Tibial artery (tissue), 4 donors: ENCODE measurements at regions of chr18 and their contacts with region 1.

Region 1: DNA sequence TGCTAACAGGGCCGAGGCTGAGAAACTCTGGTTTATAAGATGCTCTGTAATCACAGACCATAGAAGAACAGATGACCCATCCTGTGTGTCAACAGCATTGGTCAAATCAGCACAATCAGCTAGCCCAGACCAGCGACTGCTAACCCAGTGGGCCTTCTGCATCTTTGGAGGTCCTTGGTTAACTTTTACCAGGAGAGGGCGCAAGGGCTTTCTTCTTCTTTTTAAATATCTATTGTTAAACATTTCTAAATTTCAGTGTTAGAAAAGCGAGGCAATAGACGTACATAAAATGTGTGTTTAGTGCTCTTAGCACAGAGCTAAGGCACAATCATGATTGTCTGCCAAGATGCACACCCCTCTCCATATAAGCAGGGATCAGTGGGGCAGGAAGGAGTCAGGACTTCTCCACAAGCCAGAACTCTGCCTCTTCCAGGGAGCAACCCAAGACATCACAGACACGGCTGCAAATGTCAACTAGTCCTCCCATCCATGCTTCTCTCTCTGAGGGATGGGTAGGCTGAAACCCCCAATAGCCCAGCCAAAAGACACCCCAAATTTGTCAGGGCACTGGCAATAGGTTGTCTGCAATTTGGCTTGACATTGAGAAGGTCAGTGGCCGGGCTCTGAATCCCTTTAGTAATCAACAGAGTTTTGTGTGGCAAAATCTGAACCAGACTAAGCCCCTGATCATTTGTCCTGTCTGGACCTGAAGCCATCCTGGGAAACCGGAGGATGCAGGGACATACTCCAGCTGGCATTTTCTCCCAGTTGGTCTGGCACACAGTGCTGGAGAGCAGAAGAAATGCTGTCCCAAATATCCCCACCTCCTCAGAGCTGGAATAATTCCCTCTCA is 188.2 kb downstream of the BCL2 start:
- DNase-seq: peak in 1 of 2 donors; percentile 69
- H3K4me3 ChIP-seq: no peak overlapping the region
- H3K27ac ChIP-seq: peak overlapping the region; percentile 64 to 71
- H3K4me1 ChIP-seq: peaks cover 0 to 16% (median 7%) of the 10 kb centered on the region in 4 donors
- H3K27me3 ChIP-seq: no peaks in the 10 kb centered on the region
- CTCF ChIP-seq: peak; percentile 69 to 81

Region 2: DNA sequence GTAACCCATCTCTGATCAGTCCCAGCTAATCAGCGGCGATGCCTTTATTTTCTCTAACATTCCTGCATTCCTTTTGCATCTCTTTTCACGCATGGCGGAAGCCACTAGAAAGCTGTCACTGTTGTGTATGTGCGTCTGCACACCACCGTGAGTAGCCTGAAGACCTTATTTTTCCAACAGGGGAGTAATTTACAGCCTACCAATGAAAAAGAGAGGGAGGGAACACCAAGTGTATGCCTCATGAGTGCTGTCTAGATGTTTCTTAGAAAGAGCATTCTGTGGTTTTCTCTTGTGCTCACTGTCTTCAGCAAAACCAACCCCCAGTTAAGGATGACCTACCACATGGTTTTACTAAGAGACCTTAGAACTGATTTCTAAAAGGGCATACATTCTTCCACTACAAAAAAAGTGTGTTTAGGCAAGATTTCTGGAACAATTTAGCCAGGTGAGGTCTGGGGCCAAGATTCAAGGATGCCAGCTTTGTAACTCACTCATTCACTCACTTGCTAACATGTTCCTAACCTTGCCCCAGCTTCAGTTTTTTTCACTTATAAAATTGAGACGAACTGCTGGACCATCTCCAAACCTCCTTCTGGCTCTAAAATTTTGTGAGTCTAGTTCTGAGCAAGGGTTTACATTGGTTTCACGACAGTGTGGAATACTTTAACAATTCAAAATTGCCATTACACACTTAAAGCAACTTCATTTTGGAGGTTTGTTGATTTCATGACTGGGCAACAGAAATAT is 136.8 kb after region 1 on chr18:
- intact Hi-C with region 1: loop called (anchors 1 kb)
- DNase-seq: no peak
- H3K4me3 ChIP-seq: no peak overlapping the region
- H3K27ac ChIP-seq: peak overlapping the region in 1 of 2 donors; percentile 22
- H3K4me1 ChIP-seq: peaks cover 0 to 30% (median 21%) of the 10 kb centered on the region in 4 donors
- H3K27me3 ChIP-seq: no peaks in the 10 kb centered on the region
- CTCF ChIP-seq: no peak